ENCODE measurements at regions of chr12 and their contacts with region 1.

Region 1: GRCh38 chr12:3041558-3042164 is 35.5 kb upstream of the TSPAN9 start:
- DNase-seq: peak in 7 of 9 experiments; percentile 6 to 65 (median 30)
- ATAC-seq: peak; percentile 56
- H3K4me3 ChIP-seq: no peak overlapping the region
- H3K4me3 Mint-ChIP-seq: no peak overlapping the region
- H3K27ac ChIP-seq: no peak overlapping the region
- H3K27ac Mint-ChIP-seq: no peak overlapping the region
- H3K4me1 ChIP-seq: no peaks in the 10 kb centered on the region
- H3K4me1 Mint-ChIP-seq: peaks cover 2% of the 10 kb centered on the region
- H3K27me3 ChIP-seq: peaks cover 3 to 5% of the 10 kb centered on the region in 2 experiments
- H3K27me3 Mint-ChIP-seq: peaks cover 35% of the 10 kb centered on the region
- CTCF ChIP-seq: no peak

Region 2: DNA sequence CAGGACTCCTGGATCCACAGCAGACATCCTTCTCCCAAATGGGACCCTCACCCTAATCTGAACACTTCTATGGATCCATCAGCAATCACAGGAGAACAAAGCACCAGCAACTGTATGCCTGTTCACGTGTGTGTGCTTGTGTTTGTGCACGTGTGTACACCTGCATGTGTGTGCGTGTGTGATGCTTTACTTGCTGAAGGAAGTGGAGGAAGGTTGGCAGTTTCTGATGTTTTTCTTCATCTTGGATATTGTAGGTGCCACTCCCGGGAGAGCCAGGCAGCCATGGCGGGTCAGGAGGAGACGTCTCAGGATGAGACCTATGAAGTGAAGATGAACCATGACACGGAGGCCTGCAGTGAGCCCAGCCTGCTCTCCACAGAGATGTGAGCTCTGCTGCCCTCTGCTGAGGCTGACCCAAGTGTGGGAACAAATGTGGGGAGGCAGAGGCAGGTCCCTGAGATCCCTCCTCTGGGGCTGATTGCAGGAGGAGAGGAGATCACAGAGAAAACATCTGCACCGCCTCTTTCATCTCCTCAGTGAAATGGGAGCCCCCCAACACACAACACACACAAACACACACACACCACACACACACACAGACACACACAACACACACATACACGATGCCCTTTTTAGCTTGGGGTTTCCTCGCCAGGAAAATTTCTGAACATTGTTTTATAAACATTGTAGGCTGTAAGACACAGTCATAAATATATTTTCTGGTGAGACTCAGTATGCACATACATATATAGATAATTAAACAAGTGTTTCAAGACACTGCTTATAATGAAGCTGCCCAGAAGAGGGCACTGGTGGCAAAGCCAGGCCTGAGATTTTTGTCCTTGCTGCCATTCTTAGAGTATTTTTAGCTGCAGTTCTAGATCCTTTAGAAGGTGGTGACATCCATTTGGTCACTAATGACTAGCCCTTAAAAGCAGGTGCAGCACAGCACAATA is 359.1 kb before region 1 on chr12:
- CTCF ChIA-PET with region 1: interaction called, 4 read pairs
- POLR2A ChIA-PET with region 1: no interaction called
- intact Hi-C with region 1: loop called in 1 of 2 experiments (anchors 5 kb)
- DNase-seq: peak in 6 of 9 experiments; percentile 33 to 72 (median 50)
- ATAC-seq: peak; percentile 79
- H3K4me3 ChIP-seq: no peak overlapping the region
- H3K4me3 Mint-ChIP-seq: no peak overlapping the region
- H3K27ac ChIP-seq: no peak overlapping the region
- H3K27ac Mint-ChIP-seq: peak overlapping the region; percentile 66
- H3K4me1 ChIP-seq: no peaks in the 10 kb centered on the region
- H3K4me1 Mint-ChIP-seq: peaks cover 7% of the 10 kb centered on the region
- H3K27me3 ChIP-seq: no peaks in the 10 kb centered on the region
- H3K27me3 Mint-ChIP-seq: no peaks in the 10 kb centered on the region
- CTCF ChIP-seq: peak; percentile 77

Region 3: DNA sequence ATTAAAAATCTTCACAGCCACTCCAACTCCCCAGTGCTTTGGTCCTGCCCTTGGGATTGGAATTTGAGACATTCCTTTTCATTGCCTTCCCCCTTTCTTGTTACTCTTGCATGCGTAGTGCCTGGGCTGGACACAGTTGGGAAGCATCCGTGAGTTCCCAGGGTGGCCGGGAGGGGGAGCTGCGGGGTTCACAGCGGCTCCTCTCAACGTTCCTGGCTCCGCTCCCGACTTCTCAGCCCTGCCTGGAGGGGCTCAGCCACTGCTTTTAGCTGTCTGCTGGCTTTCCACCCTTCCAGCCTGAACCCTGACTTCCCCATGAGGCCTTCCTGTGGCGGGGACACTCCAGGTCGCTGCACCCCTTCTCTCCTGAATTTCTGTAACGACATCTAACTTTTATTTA is 188.0 kb before region 1 on chr12:
- CTCF ChIA-PET with region 1: no interaction called
- POLR2A ChIA-PET with region 1: no interaction called
- intact Hi-C with region 1: loop called in 1 of 2 experiments (anchors 10 kb)
- DNase-seq: peak in 6 of 9 experiments; percentile 20 to 55 (median 42)
- ATAC-seq: peak; percentile 56
- H3K4me3 ChIP-seq: no peak overlapping the region
- H3K4me3 Mint-ChIP-seq: no peak overlapping the region
- H3K27ac ChIP-seq: no peak overlapping the region
- H3K27ac Mint-ChIP-seq: no peak overlapping the region
- H3K4me1 ChIP-seq: no peaks in the 10 kb centered on the region
- H3K4me1 Mint-ChIP-seq: peaks cover 2% of the 10 kb centered on the region
- H3K27me3 ChIP-seq: no peaks in the 10 kb centered on the region
- H3K27me3 Mint-ChIP-seq: no peaks in the 10 kb centered on the region
- CTCF ChIP-seq: peak; percentile 57

Region 4: DNA sequence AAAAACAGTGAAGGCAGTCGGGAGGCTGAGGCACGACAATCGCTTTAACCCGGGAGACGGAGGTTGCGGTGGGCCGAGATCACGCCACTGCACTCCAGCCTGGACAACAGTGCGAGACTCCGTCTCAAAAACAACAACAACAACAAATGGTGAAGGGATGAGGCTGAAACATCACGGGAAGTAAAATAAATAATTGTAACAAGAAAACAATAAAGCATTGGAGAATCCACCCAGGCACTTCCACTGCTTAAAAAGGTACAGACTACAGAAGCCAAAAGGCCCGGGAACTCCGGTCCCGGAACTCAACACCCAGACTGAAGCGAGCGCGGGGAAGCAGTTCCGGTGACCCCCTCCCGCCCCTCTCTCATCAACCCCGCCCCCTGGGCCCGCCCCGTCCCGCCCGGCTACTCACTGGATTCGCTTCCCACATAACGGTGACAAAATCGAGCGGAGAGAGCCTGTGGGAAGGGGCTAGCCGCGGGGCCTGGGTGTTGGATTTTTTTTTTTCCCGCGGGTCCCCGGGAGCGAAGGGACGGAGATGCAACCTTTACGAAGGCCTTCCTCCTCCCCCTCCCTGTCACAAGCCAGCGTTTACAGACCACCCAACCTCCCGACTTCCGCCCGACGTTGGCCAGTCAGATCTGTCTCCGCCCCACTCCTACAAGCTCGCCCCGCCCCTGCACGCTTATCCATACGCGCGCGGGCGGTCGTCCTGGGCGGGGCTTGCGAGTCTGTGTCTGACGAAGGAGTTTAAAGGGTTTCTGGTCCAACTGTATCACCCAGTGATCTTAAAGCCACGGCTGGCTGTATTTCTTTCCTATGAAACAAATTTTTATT is 831.4 kb after region 1 on chr12 and contains the start of gene PARP11:
- CTCF ChIA-PET with region 1: no interaction called
- POLR2A ChIA-PET with region 1: no interaction called
- intact Hi-C with region 1: no loop called
- DNase-seq: peak; percentile 95 to 99 (median 98)
- ATAC-seq: peak; percentile 96
- H3K4me3 ChIP-seq: peak within 1 kb of the TSS; percentile 64 to 80
- H3K4me3 Mint-ChIP-seq: peak within 1 kb of the TSS; percentile 97
- H3K27ac ChIP-seq: peak within 1 kb of the TSS; percentile 88 to 97
- H3K27ac Mint-ChIP-seq: peak within 1 kb of the TSS; percentile 99
- H3K4me1 ChIP-seq: peaks cover 45% of the 10 kb centered on the region
- H3K4me1 Mint-ChIP-seq: peaks cover 47% of the 10 kb centered on the region
- H3K27me3 ChIP-seq: no peaks in the 10 kb centered on the region
- H3K27me3 Mint-ChIP-seq: no peaks in the 10 kb centered on the region
- CTCF ChIP-seq: no peak
- total RNA-seq, gene PARP11: 11.5 to 11.8 TPM